ENCODE measurements at regions of chr12 and their contacts with region 1.

Region 1: GRCh38 chr12:47837190-47838171 is 17.8 kb upstream of the HDAC7 start:
- DNase-seq: peak in 1 of 2 experiments; percentile 86
- H3K4me3 ChIP-seq: no peak overlapping the region
- H3K27ac ChIP-seq: no peak overlapping the region
- H3K4me1 ChIP-seq: peaks cover 0 to 6% (median under 1%) of the 10 kb centered on the region in 4 experiments; a peak in 3 of 7 replicates
- H3K27me3 ChIP-seq: no peaks in the 10 kb centered on the region; a peak in 1 of 7 replicates
- CTCF ChIP-seq: peak; percentile 75 to 92 (median 83)
- EP300 ChIP-seq: no peak
- POLR2A ChIP-seq: no peak
- RAD21 ChIP-seq: peak; percentile 89 to 93

Region 2: DNA sequence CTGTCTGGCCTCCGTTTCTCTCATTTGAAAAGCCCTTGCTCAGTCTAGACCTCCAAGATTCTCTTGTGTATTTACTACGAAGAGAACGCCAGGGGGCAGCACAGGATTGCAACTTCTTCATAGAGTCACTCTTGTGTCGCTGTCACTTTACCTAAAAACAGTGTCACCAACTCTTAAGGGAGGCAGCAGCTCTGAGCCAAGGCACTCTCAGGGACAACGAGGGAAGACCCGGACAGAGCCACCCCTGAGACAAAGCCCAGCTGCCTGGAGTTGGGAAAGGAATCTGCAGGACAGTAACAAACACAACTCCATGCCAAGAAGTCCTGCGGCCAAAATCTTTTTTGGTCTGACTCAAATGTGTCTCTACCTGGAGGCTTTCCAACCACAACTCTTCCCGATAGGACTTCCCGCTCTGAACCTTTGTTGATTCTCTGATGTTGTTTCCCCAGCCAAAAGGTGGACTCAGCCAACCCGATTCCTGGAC is 122.0 kb before region 1 on chr12:
- CTCF ChIA-PET with region 1: interaction called, 78 read pairs
- POLR2A ChIA-PET with region 1: no interaction called
- DNase-seq: peak in 1 of 2 experiments; percentile 79
- H3K4me3 ChIP-seq: no peak overlapping the region
- H3K27ac ChIP-seq: no peak overlapping the region
- H3K4me1 ChIP-seq: peaks cover 4 to 9% (median 8%) of the 10 kb centered on the region in 4 experiments; a peak in 5 of 7 replicates
- H3K27me3 ChIP-seq: peaks cover 0 to 7% (median 3%) of the 10 kb centered on the region in 4 experiments; a peak in 3 of 7 replicates
- CTCF ChIP-seq: peak in 2 of 3 experiments; percentile 77 to 84; a peak in 3 of 4 replicates
- EP300 ChIP-seq: no peak
- POLR2A ChIP-seq: no peak
- RAD21 ChIP-seq: peak; percentile 84 to 88

Region 3: GRCh38 chr12:47736877-47737676 is 100.4 kb before region 1 on chr12:
- CTCF ChIA-PET with region 1: interaction called, 296 read pairs
- POLR2A ChIA-PET with region 1: interaction called, 8 read pairs
- DNase-seq: no peak
- H3K4me3 ChIP-seq: no peak overlapping the region
- H3K27ac ChIP-seq: no peak overlapping the region
- H3K4me1 ChIP-seq: peaks cover 3 to 19% (median 14%) of the 10 kb centered on the region in 4 experiments
- H3K27me3 ChIP-seq: peaks cover 0 to 2% (median 0%) of the 10 kb centered on the region in 4 experiments; a peak in 1 of 7 replicates
- CTCF ChIP-seq: no peak
- EP300 ChIP-seq: no peak
- POLR2A ChIP-seq: no peak
- RAD21 ChIP-seq: no peak

Region 4: GRCh38 chr12:47758834-47759690 is 78.4 kb before region 1 on chr12 and contains the start of gene RAPGEF3:
- CTCF ChIA-PET with region 1: interaction called, 39 read pairs
- POLR2A ChIA-PET with region 1: no interaction called
- DNase-seq: peak in 1 of 2 experiments; percentile 81
- H3K4me3 ChIP-seq: peak within 1 kb of the TSS; percentile 32 to 72 (median 45)
- H3K27ac ChIP-seq: no peak within 1 kb of the TSS
- H3K4me1 ChIP-seq: peaks cover 6 to 15% (median 10%) of the 10 kb centered on the region in 4 experiments; a peak in 6 of 7 replicates
- H3K27me3 ChIP-seq: peaks cover 0 to 2% (median 0%) of the 10 kb centered on the region in 4 experiments; a peak in 2 of 7 replicates
- CTCF ChIP-seq: peak; percentile 46 to 60 (median 49); a peak in 3 of 4 replicates
- EP300 ChIP-seq: peak in 1 of 2 experiments; percentile 33; a peak in 1 of 3 replicates
- POLR2A ChIP-seq: no peak; a peak in 1 of 3 replicates
- RAD21 ChIP-seq: peak; percentile 29 to 35
- total RNA-seq, gene RAPGEF3: 6.7 and 9.4 TPM in 2 replicates

Region 5: DNA sequence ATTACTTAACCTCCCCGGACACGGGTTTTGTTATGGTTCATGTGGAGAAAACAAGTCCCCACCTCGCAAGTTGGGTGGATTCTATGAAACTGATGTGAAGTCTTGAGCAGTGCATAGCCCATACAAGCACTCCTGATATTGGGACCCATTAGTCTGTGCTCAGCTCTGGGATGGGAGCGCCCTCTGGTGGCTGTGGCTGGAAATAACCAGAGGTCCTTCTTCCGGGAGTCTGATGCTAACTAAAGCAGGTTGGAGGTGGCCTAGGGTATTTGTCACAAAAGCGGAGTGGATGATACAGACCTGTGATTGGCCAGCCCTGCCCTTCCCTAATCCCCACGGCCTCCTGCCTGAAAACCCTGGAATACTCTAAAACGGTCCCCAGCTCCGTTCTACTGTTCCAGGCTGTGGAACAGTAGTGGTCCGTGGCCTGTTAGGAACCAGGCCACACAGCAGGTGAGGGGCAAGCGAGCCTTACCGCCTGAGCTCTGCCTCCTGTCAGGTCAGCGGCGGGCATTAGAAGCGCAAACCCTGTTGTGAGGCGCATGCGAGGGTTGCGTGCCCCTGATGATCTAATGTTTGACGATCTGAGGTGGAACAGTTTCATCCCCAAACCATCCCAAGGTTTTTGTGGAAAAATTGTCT is 58.1 kb before region 1 on chr12:
- CTCF ChIA-PET with region 1: interaction called, 2,001 read pairs
- POLR2A ChIA-PET with region 1: interaction called, 10 read pairs
- DNase-seq: peak; percentile 88 to 99
- H3K4me3 ChIP-seq: peak overlapping the region in 3 of 4 experiments; percentile 8 to 42 (median 12); a peak in 3 of 8 replicates
- H3K27ac ChIP-seq: no peak overlapping the region
- H3K4me1 ChIP-seq: peaks cover 0 to 18% (median 11%) of the 10 kb centered on the region in 4 experiments; a peak in 5 of 7 replicates
- H3K27me3 ChIP-seq: peaks cover 0 to 9% (median 5%) of the 10 kb centered on the region in 4 experiments; a peak in 4 of 7 replicates
- CTCF ChIP-seq: peak in 2 of 3 experiments; percentile 96; a peak in 3 of 4 replicates
- EP300 ChIP-seq: no peak; a peak in 1 of 3 replicates
- POLR2A ChIP-seq: peak in 1 of 2 experiments; percentile 15; a peak in 1 of 3 replicates
- RAD21 ChIP-seq: peak; percentile 95 to 97

Region 6: GRCh38 chr12:47850153-47851084 is 12.9 kb after region 1 on chr12:
- CTCF ChIA-PET with region 1: interaction called, 23 read pairs
- POLR2A ChIA-PET with region 1: interaction called, 3 read pairs
- DNase-seq: no peak
- H3K4me3 ChIP-seq: no peak overlapping the region
- H3K27ac ChIP-seq: no peak overlapping the region
- H3K4me1 ChIP-seq: peaks cover 0 to 13% (median 5%) of the 10 kb centered on the region in 4 experiments; a peak in 4 of 7 replicates
- H3K27me3 ChIP-seq: peaks cover 0 to 2% (median 0%) of the 10 kb centered on the region in 4 experiments; a peak in 2 of 7 replicates
- CTCF ChIP-seq: no peak
- EP300 ChIP-seq: no peak
- POLR2A ChIP-seq: no peak
- RAD21 ChIP-seq: no peak

Region 7: DNA sequence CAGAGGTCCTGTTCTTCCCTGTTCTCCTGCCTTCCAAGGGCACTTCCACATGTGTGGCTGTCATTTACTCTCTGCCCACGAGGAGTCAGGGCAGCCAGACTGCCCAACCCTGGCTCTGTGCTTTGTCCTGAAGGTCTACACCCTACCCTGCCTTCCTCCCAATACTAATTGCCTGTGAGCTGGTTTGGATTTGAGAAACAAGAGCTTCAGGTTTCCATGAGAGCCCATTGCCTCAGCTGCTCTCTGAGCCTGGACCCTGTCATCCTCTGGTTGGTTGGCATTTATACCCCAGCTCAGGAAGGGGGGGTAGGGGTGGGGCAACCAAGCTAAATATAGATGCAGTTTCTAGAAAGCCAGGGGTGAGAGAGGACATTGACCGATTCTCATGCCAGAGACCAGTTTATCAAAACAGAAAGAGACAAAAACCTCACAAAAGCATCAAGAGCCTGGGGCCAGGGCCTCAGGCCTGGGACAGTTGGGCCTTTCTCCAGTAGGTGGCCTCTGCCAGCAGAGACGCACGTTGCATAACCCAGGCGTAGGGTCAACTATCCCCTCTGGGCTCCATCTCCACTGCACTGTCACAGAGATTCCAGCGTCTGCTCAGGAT is 32.8 kb after region 1 on chr12:
- CTCF ChIA-PET with region 1: interaction called, 13 read pairs
- POLR2A ChIA-PET with region 1: interaction called, 4 read pairs
- DNase-seq: peak; percentile 17 to 56
- H3K4me3 ChIP-seq: no peak overlapping the region
- H3K27ac ChIP-seq: no peak overlapping the region
- H3K4me1 ChIP-seq: no peaks in the 10 kb centered on the region
- H3K27me3 ChIP-seq: no peaks in the 10 kb centered on the region
- CTCF ChIP-seq: peak; percentile 74 to 80 (median 78)
- EP300 ChIP-seq: no peak
- POLR2A ChIP-seq: no peak
- RAD21 ChIP-seq: peak; percentile 55 to 68; a peak in 3 of 4 replicates